Motor neuron (in vitro differentiated cells): ENCODE measurements at regions of chr1 and their contacts with region 1.

Region 1: GRCh38 chr1:87131809-87132283 is 196.8 kb upstream of the LMO4 start:
- ATAC-seq: peak; percentile 82 to 100 (median 97)
- H3K4me3 ChIP-seq: peak overlapping the region in 3 of 5 donors; percentile 13 to 30 (median 16)
- H3K27ac ChIP-seq: no peak overlapping the region
- H3K4me1 ChIP-seq: peaks cover 8 to 17% of the 10 kb centered on the region in 2 donors

Region 2: DNA sequence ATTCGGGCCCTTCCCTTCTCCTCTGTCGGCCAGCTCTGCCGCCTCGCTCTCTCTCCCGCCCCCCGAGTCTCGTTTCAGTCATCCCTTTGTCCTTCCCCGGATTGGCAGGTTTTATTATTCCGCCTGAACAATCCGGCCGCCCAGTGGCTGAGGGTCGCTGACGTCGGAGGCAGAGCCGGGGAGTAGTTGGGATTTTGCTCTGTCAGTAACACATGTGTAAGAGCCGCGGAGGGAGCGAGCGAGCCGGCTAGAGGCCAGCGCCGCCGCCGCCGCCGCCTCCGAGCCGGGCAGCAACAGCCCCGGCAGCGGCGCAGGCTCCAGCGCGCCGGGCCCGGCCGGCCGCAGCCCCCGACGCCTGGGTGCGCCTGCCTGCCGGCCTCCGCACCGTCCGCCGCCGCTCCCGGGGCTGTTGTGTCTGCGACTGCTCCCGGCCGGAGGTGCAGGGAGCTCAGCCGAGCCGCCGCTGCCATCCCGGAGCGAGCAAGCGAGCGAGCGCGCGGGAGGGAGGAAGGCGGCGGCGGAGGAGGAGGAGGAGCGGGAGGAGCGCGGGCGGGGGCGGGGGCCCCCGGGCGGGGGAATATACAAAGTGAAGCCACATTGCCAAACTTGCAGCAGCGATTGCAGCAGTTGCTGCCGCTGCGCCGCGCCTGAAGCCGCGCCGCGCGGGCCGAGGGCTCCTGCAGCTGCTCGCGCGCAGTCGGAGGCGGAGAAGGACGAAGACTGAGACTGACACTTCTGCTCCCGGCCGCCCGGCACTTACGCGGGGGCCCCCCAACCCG is 196.6 kb after region 1 on chr1 and contains the start of gene LMO4:
- in situ Hi-C with region 1: loop called in 2 of 9 experiments (anchors 25 kb)
- ATAC-seq: peak; percentile 83 to 92 (median 89)
- H3K4me3 ChIP-seq: peak within 1 kb of the TSS; percentile 62 to 92 (median 75)
- H3K27ac ChIP-seq: peak within 1 kb of the TSS; percentile 87 to 88
- H3K4me1 ChIP-seq: peaks cover 6 to 24% of the 10 kb centered on the region in 2 donors
- total RNA-seq, gene LMO4: 45.9 to 184 (median 65.4) TPM

Region 3: GRCh38 chr1:87953732-87954344 is 822.0 kb after region 1 on chr1:
- in situ Hi-C with region 1: loop called in 1 of 9 experiments (anchors 25 kb)
- ATAC-seq: peak; percentile 30 to 84 (median 55)
- H3K4me3 ChIP-seq: no peak overlapping the region
- H3K27ac ChIP-seq: no peak overlapping the region
- H3K4me1 ChIP-seq: peaks cover 0 to 5% of the 10 kb centered on the region in 2 donors

Region 4: GRCh38 chr1:88302843-88303486 is 1171.1 kb after region 1 on chr1:
- in situ Hi-C with region 1: loop called in 2 of 9 experiments (anchors 25 kb)
- ATAC-seq: peak in 4 of 8 experiments; percentile 39 to 54 (median 45)
- H3K4me3 ChIP-seq: no peak overlapping the region
- H3K27ac ChIP-seq: no peak overlapping the region
- H3K4me1 ChIP-seq: no peaks in the 10 kb centered on the region

Region 5: GRCh38 chr1:88867743-88868521 is 1736.1 kb after region 1 on chr1:
- in situ Hi-C with region 1: loop called in 1 of 9 experiments (anchors 25 kb)
- ATAC-seq: peak in 1 of 8 experiments; percentile 45
- H3K4me3 ChIP-seq: no peak overlapping the region
- H3K27ac ChIP-seq: no peak overlapping the region
- H3K4me1 ChIP-seq: no peaks in the 10 kb centered on the region